PC-3 (cell line): ENCODE measurements at regions of chr14 and their contacts with region 1.

Region 1: GRCh38 chr14:53539489-53540126 is 386.5 kb upstream of the DDHD1 start:
- DNase-seq: peak; percentile 92
- ATAC-seq: peak; percentile 62
- H3K4me3 ChIP-seq: no peak overlapping the region
- H3K27ac ChIP-seq: peak overlapping the region; percentile 3; the same call in 1 of the 2 replicates
- H3K4me1 ChIP-seq: peaks cover 26% of the 10 kb centered on the region
- H3K27me3 ChIP-seq: no peaks in the 10 kb centered on the region
- CTCF ChIP-seq: peak; percentile 98

Region 2: DNA sequence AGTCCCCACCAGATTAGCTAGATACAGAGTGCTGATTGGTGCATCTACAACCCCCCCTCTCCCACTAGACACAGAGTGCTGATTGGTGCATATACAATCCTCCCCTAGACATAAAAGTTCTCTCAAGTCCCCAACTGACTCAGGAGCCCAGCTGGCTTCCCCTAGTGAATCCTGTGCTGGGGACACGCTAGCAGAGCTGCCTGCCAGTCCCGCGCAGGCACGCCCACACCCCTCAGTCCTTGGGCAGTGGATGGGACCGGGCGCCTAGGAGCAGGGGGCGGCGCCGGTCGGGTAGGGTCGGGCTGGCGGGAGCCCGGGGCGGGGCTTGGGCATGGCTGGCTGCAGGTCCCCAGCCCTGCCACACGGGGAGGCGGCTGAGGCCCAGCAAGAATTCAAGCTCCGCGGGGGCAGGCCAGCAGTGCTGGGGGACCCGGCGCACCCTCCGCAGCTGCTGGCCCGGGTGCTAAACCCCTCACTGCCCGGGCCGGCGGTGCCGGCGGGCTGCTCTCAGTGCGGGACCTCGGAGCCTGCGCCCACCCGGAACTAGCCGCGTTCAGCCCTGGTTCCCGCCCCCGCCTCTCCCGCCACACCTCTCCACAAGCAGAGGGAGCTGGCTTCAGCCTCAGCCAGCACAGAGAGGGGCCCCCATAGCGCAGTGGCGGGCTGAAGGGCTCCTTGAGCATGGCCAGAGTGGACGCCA is 322.2 kb before region 1 on chr14:
- CTCF ChIA-PET with region 1: no interaction called
- POLR2A ChIA-PET with region 1: no interaction called
- intact Hi-C with region 1: no loop called
- DNase-seq: peak; percentile 71
- ATAC-seq: peak; percentile 99
- H3K4me3 ChIP-seq: peak overlapping the region; percentile 84
- H3K27ac ChIP-seq: no peak overlapping the region
- H3K4me1 ChIP-seq: peaks cover 6% of the 10 kb centered on the region
- H3K27me3 ChIP-seq: no peaks in the 10 kb centered on the region
- CTCF ChIP-seq: peak; percentile 54; the same call in 1 of the 2 replicates

Region 3: GRCh38 chr14:53360829-53361228 is 178.8 kb before region 1 on chr14:
- CTCF ChIA-PET with region 1: no interaction called
- POLR2A ChIA-PET with region 1: no interaction called
- intact Hi-C with region 1: no loop called
- DNase-seq: no peak
- ATAC-seq: no peak
- H3K4me3 ChIP-seq: no peak overlapping the region
- H3K27ac ChIP-seq: no peak overlapping the region
- H3K4me1 ChIP-seq: no peaks in the 10 kb centered on the region
- H3K27me3 ChIP-seq: no peaks in the 10 kb centered on the region
- CTCF ChIP-seq: no peak

Region 4: GRCh38 chr14:53608396-53608795 is 68.8 kb after region 1 on chr14:
- CTCF ChIA-PET with region 1: no interaction called
- POLR2A ChIA-PET with region 1: no interaction called
- intact Hi-C with region 1: loop called (anchors 5 kb)
- DNase-seq: peak; percentile 88
- ATAC-seq: peak; percentile 100
- H3K4me3 ChIP-seq: no peak overlapping the region
- H3K27ac ChIP-seq: peak overlapping the region; percentile 12; the same call in 1 of the 2 replicates
- H3K4me1 ChIP-seq: peaks cover 20% of the 10 kb centered on the region
- H3K27me3 ChIP-seq: no peaks in the 10 kb centered on the region
- CTCF ChIP-seq: no peak

Region 5: DNA sequence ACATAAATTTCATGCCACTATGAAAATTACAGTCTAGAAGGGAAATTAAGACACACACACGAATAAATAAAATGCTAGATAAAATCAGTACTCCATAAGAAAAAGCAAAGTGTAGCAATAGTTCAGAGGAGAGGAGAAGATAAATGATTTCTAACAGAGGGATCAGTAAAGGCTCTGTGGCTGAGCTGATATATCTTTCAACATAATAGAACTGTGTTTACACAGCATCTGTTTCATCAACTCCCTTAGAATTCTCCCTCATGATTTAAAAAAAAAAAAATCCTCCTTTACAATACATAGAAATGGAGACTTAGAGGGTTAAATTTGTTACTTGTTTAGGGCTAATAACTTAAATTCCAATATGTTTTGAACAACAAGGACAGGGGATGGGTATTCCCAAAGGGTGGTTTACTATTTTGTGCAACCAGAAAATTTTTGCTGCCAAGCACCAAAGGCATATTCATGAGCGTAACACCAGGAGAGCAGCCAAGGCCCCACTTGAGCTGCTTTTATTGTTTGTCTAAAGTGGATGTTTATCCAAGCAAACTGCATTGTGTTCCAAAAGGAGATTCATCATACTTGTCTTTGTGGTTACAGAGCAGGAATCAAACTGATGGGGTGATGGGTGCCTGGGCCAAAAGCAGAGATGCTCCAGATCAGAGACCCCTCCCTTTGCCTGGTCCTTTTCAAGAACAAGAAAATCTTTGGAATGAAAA is 254.3 kb after region 1 on chr14:
- CTCF ChIA-PET with region 1: no interaction called
- POLR2A ChIA-PET with region 1: no interaction called
- intact Hi-C with region 1: loop called (anchors 2 kb)
- DNase-seq: peak; percentile 55
- ATAC-seq: peak; percentile 95
- H3K4me3 ChIP-seq: no peak overlapping the region
- H3K27ac ChIP-seq: no peak overlapping the region
- H3K4me1 ChIP-seq: peaks cover 8% of the 10 kb centered on the region; the same call in 1 of the 2 replicates
- H3K27me3 ChIP-seq: no peaks in the 10 kb centered on the region
- CTCF ChIP-seq: no peak

Region 6: DNA sequence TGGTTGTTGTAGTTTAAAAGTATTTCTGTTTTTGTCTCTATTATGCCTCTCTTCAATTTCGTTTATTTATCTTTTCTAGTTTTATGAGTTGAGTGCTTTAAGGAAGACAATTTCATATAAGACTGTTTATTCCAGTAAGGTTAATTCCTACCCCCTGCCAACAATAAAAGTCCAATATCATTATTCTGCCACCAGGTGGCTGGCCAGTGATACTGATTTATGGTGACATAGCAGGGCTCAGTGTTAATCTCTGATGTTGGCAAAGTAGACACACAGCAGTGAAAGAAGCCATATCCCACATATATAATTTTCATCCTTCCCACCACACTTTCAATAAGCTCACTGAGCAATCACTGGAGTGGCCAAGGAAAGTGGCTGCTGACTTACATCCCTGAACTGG is 486.1 kb after region 1 on chr14:
- CTCF ChIA-PET with region 1: no interaction called
- POLR2A ChIA-PET with region 1: no interaction called
- intact Hi-C with region 1: loop called (anchors 1 kb)
- DNase-seq: peak; percentile 94
- ATAC-seq: peak; percentile 96
- H3K4me3 ChIP-seq: no peak overlapping the region
- H3K27ac ChIP-seq: no peak overlapping the region
- H3K4me1 ChIP-seq: peaks cover 13% of the 10 kb centered on the region
- H3K27me3 ChIP-seq: no peaks in the 10 kb centered on the region
- CTCF ChIP-seq: peak; percentile 97

Region 7: GRCh38 chr14:54420013-54420809 is 880.6 kb after region 1 on chr14:
- CTCF ChIA-PET with region 1: no interaction called
- POLR2A ChIA-PET with region 1: no interaction called
- intact Hi-C with region 1: loop called (anchors 10 kb)
- DNase-seq: peak; percentile 89
- ATAC-seq: peak; percentile 82
- H3K4me3 ChIP-seq: no peak overlapping the region
- H3K27ac ChIP-seq: no peak overlapping the region
- H3K4me1 ChIP-seq: no peaks in the 10 kb centered on the region
- H3K27me3 ChIP-seq: no peaks in the 10 kb centered on the region
- CTCF ChIP-seq: peak; percentile 96